ENCODE measurements at regions of chr3 and their contacts with region 1.

Region 1: DNA sequence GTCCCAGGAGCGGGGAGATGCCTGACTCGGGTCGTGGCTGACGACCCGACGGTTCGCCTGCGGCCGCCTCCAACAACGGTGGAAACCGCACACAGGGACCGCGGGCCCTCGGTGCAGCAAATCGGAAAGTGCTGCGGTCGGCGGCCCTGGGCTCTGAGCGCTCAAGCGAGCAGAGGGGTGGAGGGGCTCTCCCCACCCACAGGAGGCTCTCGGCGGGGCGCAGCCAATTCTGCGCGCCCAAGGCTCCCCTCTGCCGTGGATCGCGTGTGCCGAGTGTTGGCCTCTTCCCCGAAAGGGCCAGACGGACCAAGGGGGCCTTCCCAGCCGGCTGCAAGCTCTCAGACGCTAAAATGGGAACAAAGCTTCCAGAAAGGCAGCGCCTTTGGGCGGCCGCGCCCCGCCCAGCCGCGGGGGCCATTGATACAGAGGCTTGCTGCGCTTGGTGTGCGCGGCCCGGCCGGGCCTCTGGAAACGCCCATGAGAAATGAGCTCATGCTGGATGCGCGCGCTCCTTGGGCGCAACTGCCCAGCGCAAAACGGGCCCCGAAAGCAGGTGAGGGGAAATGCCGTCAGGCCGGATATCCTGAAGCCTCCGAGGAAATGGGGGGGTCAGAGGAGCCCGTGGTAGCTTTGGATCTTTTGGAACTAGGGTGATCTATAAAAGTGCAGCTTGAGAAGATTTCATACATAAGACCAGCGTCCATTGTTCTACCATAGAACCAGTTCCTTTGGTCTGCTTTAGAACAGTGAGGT is 1.2 kb upstream of the GSK3B start:
- DNase-seq: peak; percentile 79 to 95
- ATAC-seq: peak; percentile 65 to 80
- H3K4me3 ChIP-seq: peak overlapping the region; percentile 80
- H3K27ac ChIP-seq: peak overlapping the region; percentile 95 to 99
- H3K4me1 ChIP-seq: peaks cover 19% of the 10 kb centered on the region
- CTCF ChIP-seq: no peak
- EP300 ChIP-seq: no peak
- POLR2A ChIP-seq: peak; percentile 90
- RAD21 ChIP-seq: peak; percentile 12 to 28; a peak in 1 of 5 replicates

Region 2: GRCh38 chr3:120057626-120058025 is 37.8 kb before region 1 on chr3:
- CTCF ChIA-PET with region 1: no interaction called
- POLR2A ChIA-PET with region 1: interaction called, 10 read pairs
- DNase-seq: no peak
- ATAC-seq: no peak
- H3K4me3 ChIP-seq: no peak overlapping the region
- H3K27ac ChIP-seq: no peak overlapping the region
- H3K4me1 ChIP-seq: peaks cover 4% of the 10 kb centered on the region; the same call in 2 of the 3 replicates
- CTCF ChIP-seq: no peak
- EP300 ChIP-seq: no peak
- POLR2A ChIP-seq: no peak
- RAD21 ChIP-seq: no peak

Region 3: GRCh38 chr3:120147072-120147871 is 51.9 kb after region 1 on chr3:
- CTCF ChIA-PET with region 1: interaction called, 3 read pairs
- POLR2A ChIA-PET with region 1: interaction called, 13 read pairs
- DNase-seq: peak in 1 of 2 experiments; percentile 32
- ATAC-seq: peak in 1 of 2 experiments; percentile 57; a peak in 3 of 6 replicates
- H3K4me3 ChIP-seq: no peak overlapping the region
- H3K27ac ChIP-seq: peak overlapping the region; percentile 33 to 82; a peak in 3 of 6 replicates
- H3K4me1 ChIP-seq: peaks cover 38% of the 10 kb centered on the region
- CTCF ChIP-seq: no peak; the same call in 2 of the 3 replicates
- EP300 ChIP-seq: no peak
- POLR2A ChIP-seq: no peak
- RAD21 ChIP-seq: peak; percentile 38 to 71; a peak in 4 of 5 replicates

Region 4: GRCh38 chr3:120170223-120170622 is 74.8 kb after region 1 on chr3:
- CTCF ChIA-PET with region 1: no interaction called
- POLR2A ChIA-PET with region 1: interaction called, 16 read pairs
- DNase-seq: peak; percentile 31 to 61
- ATAC-seq: peak; percentile 90 to 95
- H3K4me3 ChIP-seq: no peak overlapping the region
- H3K27ac ChIP-seq: peak overlapping the region; percentile 47 to 74
- H3K4me1 ChIP-seq: peaks cover 44% of the 10 kb centered on the region
- CTCF ChIP-seq: no peak
- EP300 ChIP-seq: no peak
- POLR2A ChIP-seq: no peak
- RAD21 ChIP-seq: 0 out of 5 replicates have a peak, but pooled peaks of 1 of the 2 experiments have one; percentile 10

Region 5: GRCh38 chr3:120198305-120198878 is 103.0 kb after region 1 on chr3:
- CTCF ChIA-PET with region 1: interaction called, 3 read pairs
- POLR2A ChIA-PET with region 1: interaction called, 13 read pairs
- DNase-seq: peak; percentile 24 to 59
- ATAC-seq: peak; percentile 81 to 87
- H3K4me3 ChIP-seq: no peak overlapping the region
- H3K27ac ChIP-seq: no peak overlapping the region
- H3K4me1 ChIP-seq: peaks cover 7% of the 10 kb centered on the region; the same call in 1 of the 3 replicates
- CTCF ChIP-seq: peak; percentile 56
- EP300 ChIP-seq: no peak
- POLR2A ChIP-seq: no peak
- RAD21 ChIP-seq: peak; percentile 81 to 83